ENCODE measurements at regions of chr14 and their contacts with region 1.

Region 1: GRCh38 chr14:100078991-100079725 is 13.9 kb downstream of the EVL start:
- DNase-seq: peak; percentile 47
- H3K4me3 ChIP-seq: no peak overlapping the region; the same call in 1 of the 2 replicates
- CTCF ChIP-seq: peak; percentile 21

Region 2: DNA sequence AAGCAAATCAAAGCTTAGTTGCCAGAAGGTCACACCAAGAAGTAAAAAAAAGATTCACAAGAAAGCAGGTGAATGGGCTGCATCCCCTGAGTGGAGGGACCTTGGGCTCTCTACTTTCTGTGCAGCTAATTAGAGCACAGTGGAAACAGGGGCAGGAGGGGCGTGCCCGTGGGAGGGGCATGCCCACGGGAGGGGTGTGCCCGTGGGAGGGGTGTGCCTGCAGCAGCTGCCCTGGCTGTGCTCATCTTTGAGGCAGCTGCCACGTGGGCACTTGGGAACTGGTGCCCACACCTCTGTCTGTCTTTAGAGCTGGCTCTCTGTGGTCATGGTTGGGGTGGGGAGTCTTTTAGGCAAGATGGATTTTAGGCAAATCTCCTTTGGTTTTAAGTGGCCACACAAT is 226.0 kb before region 1 on chr14:
- CTCF ChIA-PET with region 1: no interaction called
- POLR2A ChIA-PET with region 1: no interaction called
- DNase-seq: no peak
- H3K4me3 ChIP-seq: no peak overlapping the region
- CTCF ChIP-seq: no peak

Region 3: DNA sequence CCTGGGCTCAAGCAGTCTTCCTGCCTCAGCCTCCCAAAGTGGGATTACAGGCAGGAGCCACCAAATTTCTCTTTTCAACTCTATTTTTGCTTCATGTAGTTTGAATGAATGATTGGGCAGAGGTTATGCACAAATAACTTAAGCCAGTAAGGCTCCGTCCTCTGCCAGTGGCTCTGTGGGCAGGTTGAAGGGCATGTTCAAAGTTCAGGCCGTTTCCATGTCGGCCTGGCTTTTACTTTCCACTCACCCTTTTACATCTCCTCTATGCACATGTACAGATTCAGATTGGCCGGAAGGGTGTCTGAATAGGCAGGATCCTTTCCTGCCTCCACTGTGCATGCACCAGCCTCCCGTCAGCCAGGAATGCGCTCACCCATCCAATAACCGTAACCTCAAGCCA is 153.7 kb before region 1 on chr14:
- CTCF ChIA-PET with region 1: no interaction called
- POLR2A ChIA-PET with region 1: no interaction called
- DNase-seq: no peak
- H3K4me3 ChIP-seq: no peak overlapping the region
- CTCF ChIP-seq: no peak

Region 4: GRCh38 chr14:100049220-100049619 is 29.9 kb before region 1 on chr14:
- CTCF ChIA-PET with region 1: no interaction called
- POLR2A ChIA-PET with region 1: no interaction called
- DNase-seq: no peak
- H3K4me3 ChIP-seq: no peak overlapping the region
- CTCF ChIP-seq: no peak

Region 5: DNA sequence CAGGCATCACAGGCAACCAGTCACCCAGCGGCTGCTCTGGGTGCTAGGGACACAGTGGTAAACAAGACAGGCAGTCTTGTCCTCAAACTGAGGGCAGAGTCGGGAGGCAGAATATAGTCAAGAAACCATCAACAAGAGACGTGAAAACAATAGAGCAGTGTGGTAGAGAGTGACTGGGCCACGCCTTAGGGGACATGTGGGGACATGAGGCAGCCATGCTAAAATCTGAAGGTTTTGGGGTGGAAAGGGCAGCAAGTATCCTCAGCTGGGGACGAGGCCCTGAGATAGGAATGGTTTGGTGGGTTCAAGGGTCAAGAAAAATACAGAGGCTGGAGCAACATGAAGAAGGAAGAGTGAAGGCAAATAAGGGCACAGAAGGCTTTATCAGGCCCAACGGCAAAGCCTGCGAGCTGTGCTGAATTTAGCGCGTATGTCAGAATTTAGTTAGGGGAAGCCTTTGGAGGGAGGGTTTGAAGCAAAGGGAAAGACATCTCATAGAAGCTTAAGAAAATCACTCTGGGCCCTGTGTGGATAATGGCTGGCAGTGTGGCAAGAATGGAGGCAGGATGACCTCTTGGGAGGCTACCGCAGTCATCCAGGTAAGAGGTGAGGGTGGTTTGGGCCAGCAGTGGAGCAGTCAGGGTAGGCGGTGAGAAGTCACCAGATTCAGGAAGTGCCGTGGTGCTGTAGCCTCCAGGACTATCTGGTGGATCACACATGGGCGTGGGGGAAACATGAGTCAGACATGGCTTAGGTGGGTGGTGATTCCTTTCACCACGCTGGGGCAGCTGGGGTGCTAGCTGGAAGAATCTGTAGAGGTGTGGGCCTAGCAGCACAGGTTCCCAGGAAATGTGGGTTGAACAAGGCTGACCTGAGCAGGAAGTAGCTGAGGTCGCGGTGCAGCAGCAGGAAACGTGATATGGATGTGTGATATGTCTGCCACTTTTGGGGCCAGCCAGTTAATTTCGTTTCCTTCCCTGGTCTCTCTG is 10.9 kb before region 1 on chr14:
- CTCF ChIA-PET with region 1: interaction called, 15 read pairs
- POLR2A ChIA-PET with region 1: no interaction called
- DNase-seq: no peak
- H3K4me3 ChIP-seq: no peak overlapping the region
- CTCF ChIP-seq: no peak